ENCODE measurements at regions of chr3 and their contacts with region 1.

Region 1: GRCh38 chr3:157130467-157131251 is 29.3 kb downstream of the CCNL1 start:
- DNase-seq: peak in 4 of 5 donors; percentile 46 to 66 (median 55)
- ATAC-seq: peak; percentile 3 to 65 (median 18)
- H3K4me3 ChIP-seq: peak overlapping the region in 10 of 12 donors; percentile 12 to 43 (median 32)
- H3K27ac ChIP-seq: peak overlapping the region; percentile 68 to 88 (median 80)
- H3K4me1 ChIP-seq: peaks cover 5 to 77% (median 52%) of the 10 kb centered on the region in 12 donors
- H3K27me3 ChIP-seq: no peaks in the 10 kb centered on the region
- CTCF ChIP-seq: peak; percentile 47 to 77 (median 70)
- POLR2A ChIP-seq: no peak

Region 2: GRCh38 chr3:156547637-156548036 is 583.0 kb before region 1 on chr3:
- intact Hi-C with region 1: loop called in 6 of 10 experiments (anchors 5 to 10 kb)
- DNase-seq: peak in 1 of 5 donors; percentile 45
- ATAC-seq: peak; percentile 49 to 78 (median 61)
- H3K4me3 ChIP-seq: no peak overlapping the region
- H3K27ac ChIP-seq: peak overlapping the region; percentile 35 to 80 (median 58)
- H3K4me1 ChIP-seq: peaks cover 8 to 99% (median 74%) of the 10 kb centered on the region in 12 donors
- H3K27me3 ChIP-seq: no peaks in the 10 kb centered on the region
- CTCF ChIP-seq: no peak
- POLR2A ChIP-seq: no peak

Region 3: GRCh38 chr3:156674046-156674910 is 456.4 kb before region 1 on chr3 and contains the start of gene TIPARP:
- intact Hi-C with region 1: loop called in 8 of 10 experiments (anchors 2 to 5 kb)
- DNase-seq: peak; percentile 99 to 100 (median 100)
- ATAC-seq: peak; percentile 92 to 98 (median 96)
- H3K4me3 ChIP-seq: peak within 1 kb of the TSS; percentile 66 to 97 (median 80)
- H3K27ac ChIP-seq: peak within 1 kb of the TSS; percentile 88 to 99 (median 96)
- H3K4me1 ChIP-seq: peaks cover 0 to 51% (median 29%) of the 10 kb centered on the region in 12 donors
- H3K27me3 ChIP-seq: no peaks in the 10 kb centered on the region
- CTCF ChIP-seq: peak; percentile 55 to 88 (median 77)
- POLR2A ChIP-seq: peak; percentile 81 to 99
- total RNA-seq, gene TIPARP: 17.8 to 46.8 (median 33.8) TPM

Region 4: GRCh38 chr3:156826144-156826895 is 304.3 kb before region 1 on chr3 and contains the start of gene LEKR1:
- intact Hi-C with region 1: loop called in 7 of 10 experiments (anchors 5 to 10 kb)
- DNase-seq: peak; percentile 89 to 93 (median 91)
- ATAC-seq: peak; percentile 85 to 98 (median 96)
- H3K4me3 ChIP-seq: peak within 1 kb of the TSS; percentile 56 to 94 (median 67)
- H3K27ac ChIP-seq: peak within 1 kb of the TSS; percentile 83 to 96 (median 89)
- H3K4me1 ChIP-seq: peaks cover 0 to 17% (median 6%) of the 10 kb centered on the region in 12 donors
- H3K27me3 ChIP-seq: no peaks in the 10 kb centered on the region
- CTCF ChIP-seq: peak in 1 of 12 donors; percentile 4
- POLR2A ChIP-seq: peak; percentile 14 to 72
- total RNA-seq, gene LEKR1: 0.23 to 1.8 (median 1.0) TPM in 8 of 9 donors, not detected in the other

Region 5: GRCh38 chr3:156957715-156958114 is 172.9 kb before region 1 on chr3:
- intact Hi-C with region 1: no loop called
- DNase-seq: no peak
- ATAC-seq: no peak
- H3K4me3 ChIP-seq: no peak overlapping the region
- H3K27ac ChIP-seq: no peak overlapping the region
- H3K4me1 ChIP-seq: no peaks in the 10 kb centered on the region
- H3K27me3 ChIP-seq: no peaks in the 10 kb centered on the region
- CTCF ChIP-seq: no peak
- POLR2A ChIP-seq: no peak

Region 6: DNA sequence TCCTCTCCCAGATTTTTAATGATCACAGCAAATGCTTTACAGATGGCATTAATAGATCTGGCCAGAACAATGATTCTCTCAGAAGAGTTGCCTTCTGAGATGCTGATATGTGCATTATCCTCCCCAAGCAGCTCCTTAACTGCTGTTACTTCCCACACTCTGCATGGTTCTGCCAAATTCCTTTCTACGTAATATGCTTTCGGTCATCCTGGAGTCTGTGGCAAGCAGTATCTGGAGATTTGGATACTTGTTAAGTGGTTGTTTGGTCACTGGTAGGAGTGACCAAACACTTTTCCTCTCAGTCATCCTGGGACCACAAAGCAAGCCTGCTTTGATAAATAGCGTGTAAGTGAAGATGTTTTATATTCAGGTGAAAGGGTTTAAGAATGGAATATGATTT is 100.4 kb after region 1 on chr3:
- intact Hi-C with region 1: no loop called
- DNase-seq: no peak
- ATAC-seq: peak in 1 of 4 donors; percentile 42
- H3K4me3 ChIP-seq: no peak overlapping the region
- H3K27ac ChIP-seq: no peak overlapping the region
- H3K4me1 ChIP-seq: no peaks in the 10 kb centered on the region
- H3K27me3 ChIP-seq: no peaks in the 10 kb centered on the region
- CTCF ChIP-seq: no peak
- POLR2A ChIP-seq: no peak